ENCODE measurements at regions of chr4 and their contacts with region 1.

Region 1: DNA sequence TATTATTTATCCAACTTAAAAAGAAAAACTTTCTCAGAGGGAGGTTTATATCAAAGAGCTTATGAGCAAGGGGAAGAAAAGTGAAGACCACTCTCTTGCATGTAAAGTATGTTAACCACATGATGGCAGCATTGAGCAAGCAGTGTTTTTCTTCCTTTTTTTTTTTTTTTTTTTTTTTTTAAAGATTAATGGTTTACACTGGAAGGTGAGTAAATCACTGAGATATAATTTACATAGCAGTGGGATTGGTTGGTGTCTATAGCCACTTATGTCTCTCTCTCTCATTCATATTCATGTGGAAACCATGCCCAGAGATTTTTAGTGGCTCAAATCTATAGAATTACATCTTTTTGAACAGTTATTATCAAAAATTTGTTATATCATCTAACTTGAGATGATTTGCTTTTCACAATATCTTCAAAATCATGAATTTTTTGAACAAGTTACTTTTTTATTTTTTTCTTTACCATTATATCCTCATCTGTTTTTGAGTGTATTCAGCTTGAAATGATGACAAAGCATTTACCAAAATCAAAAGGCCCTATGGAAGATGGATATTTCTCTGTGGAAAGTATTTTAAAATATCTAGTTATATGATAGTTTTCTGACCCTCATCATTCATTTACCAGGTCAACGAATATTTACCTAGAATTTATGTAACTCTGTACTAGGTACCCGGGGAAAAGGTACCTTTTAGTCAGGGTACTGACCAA is 31.6 kb downstream of the MTHFD2L start:
- H3K4me3 Mint-ChIP-seq: no peak overlapping the region
- H3K27ac Mint-ChIP-seq: no peak overlapping the region
- H3K4me1 Mint-ChIP-seq: no peaks in the 10 kb centered on the region
- H3K27me3 Mint-ChIP-seq: no peaks in the 10 kb centered on the region

Region 2: GRCh38 chr4:74311696-74312313 is 122.3 kb after region 1 on chr4:
- intact Hi-C with region 1: loop called (anchors 1 kb)
- H3K4me3 Mint-ChIP-seq: no peak overlapping the region
- H3K27ac Mint-ChIP-seq: no peak overlapping the region
- H3K4me1 Mint-ChIP-seq: peaks cover 14% of the 10 kb centered on the region
- H3K27me3 Mint-ChIP-seq: no peaks in the 10 kb centered on the region

Region 3: GRCh38 chr4:74675673-74676279 is 486.3 kb after region 1 on chr4:
- intact Hi-C with region 1: loop called (anchors 10 kb)
- H3K4me3 Mint-ChIP-seq: no peak overlapping the region
- H3K27ac Mint-ChIP-seq: no peak overlapping the region
- H3K4me1 Mint-ChIP-seq: peaks cover 6% of the 10 kb centered on the region
- H3K27me3 Mint-ChIP-seq: no peaks in the 10 kb centered on the region